Activated CD4-positive, alpha-beta T cell treated with anti-CD3 and anti-CD28 coated beads, Interleukin-2, amount 10 ng/mL, durations not matched to agents 24 days and 14 days (primary cell): ENCODE measurements at regions of chr3 and their contacts with region 1.

Region 1: DNA sequence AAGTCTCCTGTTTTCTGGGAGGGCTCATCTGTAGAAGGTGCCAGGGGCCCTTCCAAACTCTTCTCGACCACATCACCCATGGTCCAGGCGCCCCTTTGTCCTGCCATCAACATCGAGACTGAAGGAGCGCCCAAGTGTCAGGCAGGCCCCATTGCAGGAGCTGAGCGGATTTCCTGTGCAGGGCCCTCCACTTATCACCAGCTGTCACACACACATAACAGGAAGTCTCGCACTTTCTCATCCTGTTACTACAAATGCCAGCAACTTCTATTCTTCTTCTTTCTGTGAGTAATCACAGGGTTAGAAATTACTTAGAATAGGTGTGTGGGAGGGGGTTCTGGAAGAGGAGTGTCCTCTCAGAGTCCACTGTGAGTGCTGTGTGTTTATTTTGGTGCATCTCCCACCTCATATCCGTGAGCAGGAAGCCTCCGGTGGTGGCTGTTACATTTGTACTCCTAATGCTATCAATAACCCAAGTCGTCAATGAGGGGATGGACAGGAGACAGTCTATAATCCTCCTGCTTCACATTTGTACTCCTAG is at the start of gene KLHL6:
- DNase-seq: peak; percentile 91
- H3K4me3 Mint-ChIP-seq: peak within 1 kb of the TSS; percentile 95
- H3K27ac Mint-ChIP-seq: peak within 1 kb of the TSS; percentile 99
- H3K4me1 Mint-ChIP-seq: peaks cover 55% of the 10 kb centered on the region
- H3K27me3 Mint-ChIP-seq: no peaks in the 10 kb centered on the region
- total RNA-seq, gene KLHL6: 44.9 and 47.1 TPM in 2 replicates

Region 2: GRCh38 chr3:183265834-183266417 is 289.7 kb before region 1 on chr3:
- intact Hi-C with region 1: loop called (anchors 5 kb)
- DNase-seq: peak; percentile 65
- H3K4me3 Mint-ChIP-seq: no peak overlapping the region
- H3K27ac Mint-ChIP-seq: no peak overlapping the region
- H3K4me1 Mint-ChIP-seq: peaks cover 19% of the 10 kb centered on the region
- H3K27me3 Mint-ChIP-seq: no peaks in the 10 kb centered on the region

Region 3: GRCh38 chr3:183447206-183448001 is 108.2 kb before region 1 on chr3:
- intact Hi-C with region 1: no loop called
- DNase-seq: peak; percentile 94
- H3K4me3 Mint-ChIP-seq: peak overlapping the region; percentile 98
- H3K27ac Mint-ChIP-seq: peak overlapping the region; percentile 90
- H3K4me1 Mint-ChIP-seq: peaks cover 15% of the 10 kb centered on the region
- H3K27me3 Mint-ChIP-seq: peaks cover 14% of the 10 kb centered on the region

Region 4: DNA sequence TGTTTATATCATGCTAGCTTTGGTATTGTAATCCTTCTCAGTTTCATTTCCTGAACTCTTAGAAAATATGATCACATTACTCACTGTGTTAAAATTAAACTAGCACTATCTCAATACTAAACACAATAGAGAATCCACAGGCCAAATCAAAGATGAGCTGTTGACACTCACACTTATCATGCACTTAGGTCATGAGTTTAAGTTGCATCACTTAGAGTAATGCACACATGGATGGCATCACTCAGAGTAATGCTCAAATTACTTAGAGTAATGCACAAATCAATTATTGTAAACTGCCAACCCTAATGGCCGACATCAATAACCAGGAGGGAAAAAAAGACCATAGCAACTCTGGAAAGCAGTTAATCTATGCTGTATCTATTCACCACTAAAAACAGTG is 87.2 kb before region 1 on chr3:
- intact Hi-C with region 1: loop called (anchors 1 kb)
- DNase-seq: no peak
- H3K4me3 Mint-ChIP-seq: no peak overlapping the region
- H3K27ac Mint-ChIP-seq: peak overlapping the region; percentile 78
- H3K4me1 Mint-ChIP-seq: peaks cover 16% of the 10 kb centered on the region
- H3K27me3 Mint-ChIP-seq: peaks cover 4% of the 10 kb centered on the region

Region 5: DNA sequence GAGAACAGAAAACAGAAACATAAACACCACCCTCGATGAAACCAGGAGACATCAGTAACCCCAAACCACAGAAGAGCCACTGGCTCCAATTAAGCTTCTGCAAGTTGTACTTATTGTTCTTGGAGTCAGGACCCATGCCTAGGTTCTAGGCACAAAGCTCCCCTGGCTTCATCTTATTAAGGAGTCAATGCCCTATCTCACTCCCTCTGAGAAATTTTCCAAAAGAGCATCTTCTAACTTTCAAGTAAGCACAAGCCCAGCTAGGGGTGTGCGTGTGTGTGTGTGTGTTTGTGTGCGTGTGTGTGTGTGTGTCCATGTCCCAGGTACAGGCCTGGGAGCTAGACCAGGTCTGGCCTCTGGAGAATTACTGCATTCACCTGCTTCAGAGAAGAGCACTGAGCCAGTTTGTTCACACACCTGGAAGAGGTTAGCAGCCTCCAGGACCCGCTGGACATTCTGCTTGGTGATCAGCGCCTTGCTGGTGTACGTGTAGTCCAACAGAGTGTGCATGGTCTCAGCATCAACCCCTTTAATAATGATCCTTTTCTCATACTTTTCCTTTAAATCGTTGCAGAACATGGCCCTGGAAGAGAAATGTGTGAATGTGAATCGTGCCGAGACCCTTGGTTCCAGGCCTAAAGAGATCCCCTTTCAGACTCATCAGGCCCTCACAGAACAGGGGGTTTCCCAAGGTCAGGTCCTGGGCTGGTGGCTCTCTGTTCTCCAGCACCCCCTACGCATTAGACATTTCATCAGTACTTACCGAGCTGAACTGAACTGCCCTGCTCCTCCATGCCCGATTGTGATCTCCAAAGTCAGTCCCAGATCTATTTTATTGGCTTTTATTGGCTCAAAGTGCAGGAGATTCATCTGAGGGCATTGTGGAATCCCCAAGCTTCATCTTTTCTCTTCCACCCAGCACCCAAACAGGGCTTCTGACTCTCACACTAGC is 27.9 kb before region 1 on chr3:
- intact Hi-C with region 1: loop called (anchors 1 kb)
- DNase-seq: peak; percentile 79
- H3K4me3 Mint-ChIP-seq: peak overlapping the region; percentile 73
- H3K27ac Mint-ChIP-seq: peak overlapping the region; percentile 79
- H3K4me1 Mint-ChIP-seq: peaks cover 47% of the 10 kb centered on the region
- H3K27me3 Mint-ChIP-seq: no peaks in the 10 kb centered on the region

Region 6: DNA sequence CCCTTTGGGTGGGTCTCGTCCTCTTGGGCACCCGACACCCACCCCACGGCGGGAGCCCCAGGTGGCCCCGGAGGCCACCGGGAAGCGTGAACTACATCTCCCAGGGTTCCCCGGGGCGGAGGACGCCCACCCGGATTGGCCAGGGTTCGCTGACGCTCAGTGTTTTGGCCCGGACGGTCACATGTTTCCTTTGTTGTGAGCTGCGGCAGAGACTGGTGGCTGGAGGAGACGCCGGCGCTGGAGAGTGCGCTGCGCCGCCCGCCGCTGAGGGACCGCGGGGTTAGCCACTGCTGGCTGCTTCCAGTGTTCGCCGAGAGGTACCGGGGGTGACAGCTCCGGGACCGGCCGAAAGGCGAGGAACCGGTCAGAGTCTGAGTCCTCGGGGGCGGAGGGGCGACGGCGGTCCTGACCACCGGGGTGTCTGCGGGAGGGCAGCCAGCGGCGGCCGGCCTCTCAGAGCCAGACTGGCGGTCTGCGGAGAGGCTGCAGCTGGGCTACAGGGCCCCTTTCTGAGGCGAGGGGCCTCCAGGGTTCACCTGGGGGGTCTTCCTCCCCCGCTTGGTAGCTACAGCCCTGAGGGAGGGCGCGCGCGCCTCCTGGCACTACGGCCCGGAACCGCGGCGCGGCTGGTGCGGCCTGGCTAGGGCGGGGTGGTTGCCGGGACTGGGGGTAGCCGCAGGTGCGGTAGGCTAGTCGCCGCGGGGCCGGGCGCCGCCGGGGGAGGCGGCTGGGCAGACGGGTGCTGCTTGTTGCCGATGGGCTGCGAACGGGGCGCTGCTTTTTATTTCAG is 80.0 kb after region 1 on chr3 and contains the start of gene KLHL24:
- intact Hi-C with region 1: loop called (anchors 1 kb)
- DNase-seq: peak; percentile 97
- H3K4me3 Mint-ChIP-seq: peak within 1 kb of the TSS; percentile 94
- H3K27ac Mint-ChIP-seq: peak within 1 kb of the TSS; percentile 96
- H3K4me1 Mint-ChIP-seq: peaks cover 20% of the 10 kb centered on the region
- H3K27me3 Mint-ChIP-seq: no peaks in the 10 kb centered on the region
- total RNA-seq, gene KLHL24: 6.7 and 6.9 TPM in 2 replicates

Region 7: GRCh38 chr3:184154885-184155643 is 599.5 kb after region 1 on chr3 and contains the start of gene DVL3:
- intact Hi-C with region 1: loop called (anchors 10 kb)
- DNase-seq: peak; percentile 88
- H3K4me3 Mint-ChIP-seq: peak within 1 kb of the TSS; percentile 95
- H3K27ac Mint-ChIP-seq: peak within 1 kb of the TSS; percentile 78
- H3K4me1 Mint-ChIP-seq: peaks cover 14% of the 10 kb centered on the region
- H3K27me3 Mint-ChIP-seq: no peaks in the 10 kb centered on the region
- total RNA-seq, gene DVL3: 49.0 and 54.5 TPM in 2 replicates